PC-3 (cell line): ENCODE measurements at regions of chr1 and their contacts with region 1.

Region 1: GRCh38 chr1:26254404-26254803 is 20.4 kb downstream of the CEP85 start:
- DNase-seq: no peak
- ATAC-seq: no peak
- H3K4me3 ChIP-seq: no peak overlapping the region
- H3K27ac ChIP-seq: no peak overlapping the region
- H3K4me1 ChIP-seq: no peaks in the 10 kb centered on the region
- H3K27me3 ChIP-seq: no peaks in the 10 kb centered on the region
- CTCF ChIP-seq: no peak

Region 2: GRCh38 chr1:26169669-26170471 is 84.5 kb before region 1 on chr1 and contains the start of gene ZNF593:
- CTCF ChIA-PET with region 1: no interaction called
- POLR2A ChIA-PET with region 1: interaction called, 11 read pairs
- intact Hi-C with region 1: no loop called
- DNase-seq: peak; percentile 92
- ATAC-seq: peak; percentile 95
- H3K4me3 ChIP-seq: peak within 1 kb of the TSS; percentile 98
- H3K27ac ChIP-seq: peak within 1 kb of the TSS; percentile 72
- H3K4me1 ChIP-seq: peaks cover 11% of the 10 kb centered on the region
- H3K27me3 ChIP-seq: no peaks in the 10 kb centered on the region
- CTCF ChIP-seq: peak; percentile 81
- total RNA-seq, gene ZNF593: 155 and 165 TPM in 2 replicates

Region 3: GRCh38 chr1:26363549-26364448 is 109.4 kb after region 1 on chr1:
- CTCF ChIA-PET with region 1: no interaction called
- POLR2A ChIA-PET with region 1: no interaction called
- intact Hi-C with region 1: no loop called
- DNase-seq: peak; percentile 80
- ATAC-seq: peak; percentile 83
- H3K4me3 ChIP-seq: no peak overlapping the region
- H3K27ac ChIP-seq: no peak overlapping the region
- H3K4me1 ChIP-seq: peaks cover 5% of the 10 kb centered on the region; the same call in 1 of the 2 replicates
- H3K27me3 ChIP-seq: no peaks in the 10 kb centered on the region
- CTCF ChIP-seq: peak; percentile 98